Caco-2 (cell line): ENCODE measurements at regions of chr11 and their contacts with region 1.

Region 1: GRCh38 chr11:81192516-81192915 is 1541.1 kb downstream of the FAM181B start:
- DNase-seq: peak in 1 of 2 experiments; percentile 38
- H3K4me3 ChIP-seq: no peak overlapping the region
- H3K4me3 Mint-ChIP-seq: no peak overlapping the region
- H3K27ac Mint-ChIP-seq: no peak overlapping the region
- H3K4me1 ChIP-seq: peaks cover 19% of the 10 kb centered on the region
- H3K4me1 Mint-ChIP-seq: peaks cover 13% of the 10 kb centered on the region
- H3K27me3 ChIP-seq: no peaks in the 10 kb centered on the region
- H3K27me3 Mint-ChIP-seq: no peaks in the 10 kb centered on the region
- CTCF ChIP-seq: no peak

Region 2: GRCh38 chr11:81030186-81030585 is 162.3 kb before region 1 on chr11:
- CTCF ChIA-PET with region 1: no interaction called
- POLR2A ChIA-PET with region 1: no interaction called
- intact Hi-C with region 1: loop called (anchors 1 kb)
- DNase-seq: no peak
- H3K4me3 ChIP-seq: no peak overlapping the region
- H3K4me3 Mint-ChIP-seq: no peak overlapping the region
- H3K27ac Mint-ChIP-seq: no peak overlapping the region
- H3K4me1 ChIP-seq: peaks cover 10% of the 10 kb centered on the region
- H3K4me1 Mint-ChIP-seq: peaks cover 9% of the 10 kb centered on the region
- H3K27me3 ChIP-seq: no peaks in the 10 kb centered on the region
- H3K27me3 Mint-ChIP-seq: no peaks in the 10 kb centered on the region
- CTCF ChIP-seq: no peak

Region 3: GRCh38 chr11:81039916-81040524 is 152.5 kb before region 1 on chr11:
- CTCF ChIA-PET with region 1: no interaction called
- POLR2A ChIA-PET with region 1: no interaction called
- intact Hi-C with region 1: loop called (anchors 1 kb)
- DNase-seq: peak; percentile 64 to 70
- H3K4me3 ChIP-seq: no peak overlapping the region
- H3K4me3 Mint-ChIP-seq: peak overlapping the region; percentile 20
- H3K27ac Mint-ChIP-seq: peak overlapping the region; percentile 16
- H3K4me1 ChIP-seq: peaks cover 45% of the 10 kb centered on the region
- H3K4me1 Mint-ChIP-seq: peaks cover 47% of the 10 kb centered on the region
- H3K27me3 ChIP-seq: peaks cover 2% of the 10 kb centered on the region; the same call in 1 of the 2 replicates
- H3K27me3 Mint-ChIP-seq: no peaks in the 10 kb centered on the region
- CTCF ChIP-seq: no peak

Region 4: DNA sequence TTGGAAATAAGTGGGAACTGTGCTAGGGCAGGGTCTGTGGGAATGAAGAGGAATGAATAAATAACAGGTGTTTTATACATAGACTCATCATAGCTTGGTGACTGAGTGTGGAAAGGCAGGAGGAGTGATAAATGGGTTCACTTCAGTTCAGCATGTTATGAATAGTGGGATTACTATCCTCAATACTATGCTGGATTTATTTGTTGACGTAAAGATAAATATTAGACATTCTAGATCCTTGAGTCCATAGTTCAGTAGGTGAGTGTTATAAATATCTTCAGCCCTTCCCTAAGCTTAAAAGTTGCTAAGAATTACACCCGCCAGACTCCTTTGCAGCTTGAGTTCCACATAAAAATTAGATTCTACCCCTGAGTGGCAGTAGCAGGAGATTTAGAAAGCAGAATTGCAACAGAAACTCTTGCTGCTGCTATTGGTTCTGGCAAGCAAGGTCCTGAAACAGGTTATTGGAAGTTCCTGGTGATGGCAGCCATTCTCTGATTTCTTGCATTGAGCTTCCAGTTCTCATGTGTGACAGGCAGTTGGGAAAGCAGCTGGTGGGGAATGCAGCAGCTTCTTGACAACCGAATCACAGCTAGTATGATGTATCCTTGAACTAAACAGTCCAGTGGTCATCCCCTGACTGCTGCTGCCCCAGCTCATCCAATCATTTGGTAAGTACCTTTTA is 17.7 kb before region 1 on chr11:
- CTCF ChIA-PET with region 1: interaction called, 3 read pairs
- POLR2A ChIA-PET with region 1: no interaction called
- intact Hi-C with region 1: loop called (anchors 1 kb)
- DNase-seq: peak in 1 of 2 experiments; percentile 25
- H3K4me3 ChIP-seq: no peak overlapping the region
- H3K4me3 Mint-ChIP-seq: no peak overlapping the region
- H3K27ac Mint-ChIP-seq: no peak overlapping the region
- H3K4me1 ChIP-seq: peaks cover 29% of the 10 kb centered on the region
- H3K4me1 Mint-ChIP-seq: peaks cover 18% of the 10 kb centered on the region
- H3K27me3 ChIP-seq: no peaks in the 10 kb centered on the region
- H3K27me3 Mint-ChIP-seq: no peaks in the 10 kb centered on the region
- CTCF ChIP-seq: no peak